Gastrocnemius medialis (tissue), 4 donors: ENCODE measurements at regions of chr7 and their contacts with region 1.

Region 1: GRCh38 chr7:141014524-141015395 is at the start of gene MRPS33:
- DNase-seq: peak; percentile 95 to 96
- ATAC-seq: peak; percentile 99
- H3K4me3 ChIP-seq: peak within 1 kb of the TSS; percentile 67 to 78 (median 71)
- H3K27ac ChIP-seq: peak within 1 kb of the TSS; percentile 79 to 91 (median 84)
- H3K4me1 ChIP-seq: peaks cover 14 to 18% of the 10 kb centered on the region in 2 donors
- H3K27me3 ChIP-seq: peaks cover 0 to 4% (median 0%) of the 10 kb centered on the region in 3 donors
- CTCF ChIP-seq: no peak
- POLR2A ChIP-seq: peak; percentile 70 to 76
- total RNA-seq, gene MRPS33: 23.4 to 60.1 (median 40.8) TPM

Region 2: GRCh38 chr7:140517546-140518369 is 497.0 kb before region 1 on chr7:
- in situ Hi-C with region 1: loop called in 1 of 4 experiments (anchors 25 kb)
- intact Hi-C with region 1: no loop called
- DNase-seq: peak; percentile 74 to 83
- ATAC-seq: peak; percentile 86 to 95
- H3K4me3 ChIP-seq: no peak overlapping the region
- H3K27ac ChIP-seq: peak overlapping the region; percentile 4 to 54 (median 42)
- H3K4me1 ChIP-seq: peaks cover 0 to 3% of the 10 kb centered on the region in 2 donors
- H3K27me3 ChIP-seq: no peaks in the 10 kb centered on the region
- CTCF ChIP-seq: peak; percentile 73 to 89 (median 85)
- POLR2A ChIP-seq: no peak

Region 3: GRCh38 chr7:140696680-140697446 is 317.9 kb before region 1 on chr7 and contains the start of gene NDUFB2:
- in situ Hi-C with region 1: loop called in 3 of 4 experiments (anchors 25 kb)
- intact Hi-C with region 1: loop called (anchors 2 kb)
- DNase-seq: peak; percentile 64 to 73
- ATAC-seq: peak; percentile 94 to 95
- H3K4me3 ChIP-seq: peak within 1 kb of the TSS; percentile 71 to 95 (median 88)
- H3K27ac ChIP-seq: peak within 1 kb of the TSS; percentile 84 to 98 (median 88)
- H3K4me1 ChIP-seq: peaks cover 14 to 16% of the 10 kb centered on the region in 2 donors
- H3K27me3 ChIP-seq: no peaks in the 10 kb centered on the region
- CTCF ChIP-seq: no peak
- POLR2A ChIP-seq: peak; percentile 92 to 94
- total RNA-seq, gene NDUFB2: 449 to 793 (median 538) TPM

Region 4: GRCh38 chr7:140924019-140924820 is 90.5 kb before region 1 on chr7:
- in situ Hi-C with region 1: no loop called
- intact Hi-C with region 1: loop called (anchors 2 kb)
- DNase-seq: peak; percentile 47 to 49
- ATAC-seq: peak; percentile 78 to 83
- H3K4me3 ChIP-seq: peak overlapping the region; percentile 71 to 97 (median 95)
- H3K27ac ChIP-seq: peak overlapping the region; percentile 90 to 99 (median 96)
- H3K4me1 ChIP-seq: peaks cover 19 to 36% of the 10 kb centered on the region in 2 donors
- H3K27me3 ChIP-seq: no peaks in the 10 kb centered on the region
- CTCF ChIP-seq: peak in 3 of 5 experiments; percentile 44 to 61 (median 49)
- POLR2A ChIP-seq: peak; percentile 23 to 27

Region 5: DNA sequence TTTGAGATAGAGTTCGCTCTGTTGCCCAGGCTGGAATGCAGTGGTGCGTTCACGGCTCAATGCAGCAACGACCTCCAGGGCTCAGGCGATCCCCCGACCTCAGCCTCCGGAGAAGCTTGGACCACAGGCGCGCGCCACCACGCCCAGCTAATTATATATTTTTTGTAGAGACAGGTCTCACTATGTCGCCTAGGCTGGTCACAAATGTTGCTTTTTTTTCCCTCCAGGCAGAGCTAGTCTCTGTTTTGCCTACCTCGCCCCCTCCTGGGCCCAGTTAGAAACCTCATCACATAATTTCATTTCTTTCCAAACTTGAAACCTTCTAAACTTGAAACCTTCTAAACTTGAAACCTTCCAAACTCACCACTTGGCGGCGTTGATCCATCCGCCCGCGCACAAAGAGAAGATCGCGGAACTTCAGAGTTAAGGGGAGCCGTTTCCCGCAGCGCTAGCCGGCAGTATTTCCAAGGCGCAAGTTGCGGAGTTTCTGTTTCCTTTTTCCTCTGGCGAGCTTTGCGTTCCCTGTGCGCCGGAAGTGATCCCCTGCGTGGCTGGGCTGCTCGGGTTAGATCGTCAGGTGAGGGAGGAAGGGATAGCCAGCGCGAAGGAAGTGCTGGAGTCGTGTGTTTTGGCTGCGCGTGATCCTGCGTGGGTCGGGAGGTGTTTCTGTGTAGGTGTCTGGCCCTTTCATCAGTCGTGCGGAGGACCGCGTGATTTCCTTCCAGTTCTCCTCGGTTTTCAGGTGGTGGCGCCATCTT is 723.3 kb after region 1 on chr7 and contains the start of gene SSBP1:
- in situ Hi-C with region 1: loop called in 1 of 4 experiments (anchors 25 kb)
- intact Hi-C with region 1: loop called (anchors 1 kb)
- DNase-seq: peak; percentile 85 to 88
- ATAC-seq: peak; percentile 98 to 99
- H3K4me3 ChIP-seq: peak within 1 kb of the TSS; percentile 74 to 97 (median 84)
- H3K27ac ChIP-seq: peak within 1 kb of the TSS; percentile 81 to 87 (median 84)
- H3K4me1 ChIP-seq: peaks cover 15 to 18% of the 10 kb centered on the region in 2 donors
- H3K27me3 ChIP-seq: no peaks in the 10 kb centered on the region
- CTCF ChIP-seq: peak; percentile 68 to 80 (median 76)
- POLR2A ChIP-seq: peak; percentile 57 to 67
- total RNA-seq, gene SSBP1: 127 to 147 (median 138) TPM